CD4-positive, alpha-beta memory T cell (primary cell): ENCODE measurements at regions of chr5 and their contacts with region 1.

Region 1: GRCh38 chr5:180605554-180606214 is 14.4 kb upstream of the SCGB3A1 start:
- DNase-seq: peak in 4 of 5 donors; percentile 30 to 38 (median 34)
- H3K4me3 ChIP-seq: no peak overlapping the region
- H3K4me3 Mint-ChIP-seq: no peak overlapping the region
- H3K27ac ChIP-seq: no peak overlapping the region
- H3K27ac Mint-ChIP-seq: peak overlapping the region in 1 of 7 donors; percentile 9
- H3K4me1 ChIP-seq: no peaks in the 10 kb centered on the region
- H3K4me1 Mint-ChIP-seq: peaks cover 2 to 10% (median 6%) of the 10 kb centered on the region in 4 donors
- H3K27me3 ChIP-seq: no peaks in the 10 kb centered on the region
- H3K27me3 Mint-ChIP-seq: peaks cover 2 to 4% of the 10 kb centered on the region in 2 donors

Region 2: DNA sequence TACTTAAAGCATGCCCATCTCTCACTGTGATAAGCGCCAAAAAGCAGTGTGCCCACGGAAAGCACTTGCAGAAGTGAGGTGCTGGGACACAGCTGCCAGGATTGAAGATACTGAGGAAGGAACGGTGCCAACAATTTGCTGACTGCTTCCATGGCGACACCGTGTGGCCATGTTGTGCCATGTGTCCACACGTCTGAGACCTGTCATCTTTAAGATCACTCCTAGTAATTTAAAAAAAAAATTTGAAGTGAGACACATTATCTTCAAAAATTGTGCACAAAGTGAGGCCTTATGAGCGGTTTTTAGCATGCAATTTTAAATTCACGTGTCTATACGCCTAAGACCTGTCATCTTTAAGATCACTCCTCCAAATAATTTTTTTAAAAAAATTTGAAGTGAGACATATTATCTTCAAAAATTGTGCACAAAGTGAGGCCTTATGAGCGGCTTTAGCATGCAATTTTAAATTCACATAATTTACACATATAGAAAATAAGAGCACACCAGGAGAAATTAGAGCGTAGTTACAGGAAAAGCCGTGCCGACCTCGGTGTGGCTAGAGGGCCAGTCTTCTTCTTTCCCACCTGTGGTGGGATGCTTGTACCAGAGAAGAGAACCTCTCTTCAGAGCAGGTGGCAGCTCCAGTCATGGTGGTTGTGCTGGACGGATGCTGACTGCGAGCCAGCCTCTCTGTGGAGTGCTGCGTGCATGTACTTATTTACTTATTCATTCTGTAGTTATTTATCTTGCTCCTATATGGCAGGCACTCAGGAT is 65.1 kb after region 1 on chr5:
- CTCF ChIA-PET with region 1: no interaction called
- POLR2A ChIA-PET with region 1: no interaction called
- intact Hi-C with region 1: loop called (anchors 5 kb)
- DNase-seq: peak in 4 of 5 donors; percentile 18 to 34 (median 21)
- H3K4me3 ChIP-seq: no peak overlapping the region
- H3K4me3 Mint-ChIP-seq: peak overlapping the region in 5 of 8 donors; percentile 51 to 75 (median 68)
- H3K27ac ChIP-seq: no peak overlapping the region
- H3K27ac Mint-ChIP-seq: peak overlapping the region in 1 of 7 donors; percentile 4
- H3K4me1 ChIP-seq: peaks cover 10% of the 10 kb centered on the region
- H3K4me1 Mint-ChIP-seq: peaks cover 13 to 17% (median 14%) of the 10 kb centered on the region in 4 donors
- H3K27me3 ChIP-seq: no peaks in the 10 kb centered on the region
- H3K27me3 Mint-ChIP-seq: peaks cover 5 to 12% of the 10 kb centered on the region in 2 donors